Vagina (tissue), 2 donors: ENCODE measurements at regions of chr15 and their contacts with region 1.

Region 1: GRCh38 chr15:48168626-48169025 is 9.5 kb downstream of the MYEF2 start:
- DNase-seq: no peak
- H3K4me3 ChIP-seq: no peak overlapping the region
- H3K27ac ChIP-seq: no peak overlapping the region
- H3K4me1 ChIP-seq: no peaks in the 10 kb centered on the region
- H3K27me3 ChIP-seq: no peaks in the 10 kb centered on the region
- CTCF ChIP-seq: no peak
- POLR2A ChIP-seq: no peak

Region 2: GRCh38 chr15:47768735-47769134 is 399.9 kb before region 1 on chr15:
- intact Hi-C with region 1: loop called (anchors 5 kb)
- DNase-seq: no peak
- H3K4me3 ChIP-seq: no peak overlapping the region
- H3K27ac ChIP-seq: no peak overlapping the region
- H3K4me1 ChIP-seq: no peaks in the 10 kb centered on the region
- H3K27me3 ChIP-seq: no peaks in the 10 kb centered on the region
- CTCF ChIP-seq: no peak
- POLR2A ChIP-seq: no peak

Region 3: GRCh38 chr15:48103647-48104046 is 65.0 kb before region 1 on chr15:
- intact Hi-C with region 1: no loop called
- DNase-seq: no peak
- H3K4me3 ChIP-seq: no peak overlapping the region
- H3K27ac ChIP-seq: no peak overlapping the region
- H3K4me1 ChIP-seq: no peaks in the 10 kb centered on the region
- H3K27me3 ChIP-seq: no peaks in the 10 kb centered on the region
- CTCF ChIP-seq: no peak
- POLR2A ChIP-seq: no peak

Region 4: GRCh38 chr15:48273037-48273436 is 104.4 kb after region 1 on chr15:
- intact Hi-C with region 1: no loop called
- DNase-seq: no peak
- H3K4me3 ChIP-seq: no peak overlapping the region
- H3K27ac ChIP-seq: no peak overlapping the region
- H3K4me1 ChIP-seq: no peaks in the 10 kb centered on the region
- H3K27me3 ChIP-seq: no peaks in the 10 kb centered on the region
- CTCF ChIP-seq: no peak
- POLR2A ChIP-seq: no peak